K562 (cell line): ENCODE measurements at regions of chr22 and their contacts with region 1.

Region 1: GRCh38 chr22:20238536-20238900 is 29.6 kb downstream of the RTN4R start:
- DNase-seq: peak; percentile 89 to 99 (median 98)
- ATAC-seq: peak; percentile 91
- H3K4me3 ChIP-seq: no peak overlapping the region
- H3K27ac ChIP-seq: no peak overlapping the region
- H3K4me1 ChIP-seq: peaks cover 7 to 86% of the 10 kb centered on the region in 2 experiments; a peak in 3 of 5 replicates
- H3K27me3 ChIP-seq: peaks cover 43 to 98% of the 10 kb centered on the region in 2 experiments
- CTCF ChIP-seq: peak; percentile 98 to 99 (median 99)
- EP300 ChIP-seq: no peak
- POLR2A ChIP-seq: no peak
- RAD21 ChIP-seq: peak in 1 of 2 experiments; percentile 97; a peak in 2 of 4 replicates

Region 2: DNA sequence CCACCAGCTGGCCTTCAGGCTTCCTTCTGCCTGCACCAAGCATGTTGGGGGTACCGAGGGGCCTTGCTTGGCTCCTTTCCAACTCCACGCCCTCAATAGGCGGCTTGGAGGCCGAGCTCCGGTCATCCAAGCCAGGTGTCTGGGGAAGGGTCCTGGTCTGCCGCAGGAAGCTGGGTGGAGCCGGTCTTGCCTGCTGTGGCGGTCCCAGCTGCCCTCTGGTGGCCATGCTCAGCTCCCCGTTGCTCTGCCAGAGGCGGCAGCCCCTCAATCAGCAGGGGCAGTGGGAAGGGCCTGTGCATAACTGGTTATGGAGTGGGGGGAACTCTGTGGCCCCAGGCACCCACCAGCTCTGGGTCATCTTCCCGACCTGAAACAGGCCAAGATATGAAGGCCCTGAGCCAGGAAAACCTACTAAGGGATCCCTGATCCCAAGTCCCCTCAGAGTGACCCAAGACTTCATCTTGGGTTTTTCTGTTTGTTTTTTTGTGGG is 225.1 kb before region 1 on chr22:
- CTCF ChIA-PET with region 1: no interaction called
- POLR2A ChIA-PET with region 1: no interaction called
- in situ Hi-C with region 1: no loop called
- intact Hi-C with region 1: no loop called
- DNase-seq: peak; percentile 87 to 90 (median 88)
- ATAC-seq: peak; percentile 56
- H3K4me3 ChIP-seq: no peak overlapping the region
- H3K27ac ChIP-seq: no peak overlapping the region
- H3K4me1 ChIP-seq: peaks cover 63 to 90% of the 10 kb centered on the region in 2 experiments
- H3K27me3 ChIP-seq: peaks cover 0 to 8% of the 10 kb centered on the region in 2 experiments; a peak in 1 of 5 replicates
- CTCF ChIP-seq: peak; percentile 98 to 100 (median 99)
- EP300 ChIP-seq: no peak
- POLR2A ChIP-seq: no peak
- RAD21 ChIP-seq: peak; percentile 99 to 100

Region 3: GRCh38 chr22:20254975-20255946 is 16.7 kb after region 1 on chr22:
- CTCF ChIA-PET with region 1: no interaction called
- POLR2A ChIA-PET with region 1: interaction called, 19 read pairs
- in situ Hi-C with region 1: no loop called
- intact Hi-C with region 1: no loop called
- DNase-seq: peak in 3 of 4 experiments; percentile 46 to 47 (median 46)
- ATAC-seq: no peak
- H3K4me3 ChIP-seq: no peak overlapping the region
- H3K27ac ChIP-seq: no peak overlapping the region
- H3K4me1 ChIP-seq: peaks cover 14 to 50% of the 10 kb centered on the region in 2 experiments
- H3K27me3 ChIP-seq: peaks cover 0 to 17% of the 10 kb centered on the region in 2 experiments; a peak in 3 of 5 replicates
- CTCF ChIP-seq: no peak
- EP300 ChIP-seq: no peak
- POLR2A ChIP-seq: no peak
- RAD21 ChIP-seq: no peak

Region 4: DNA sequence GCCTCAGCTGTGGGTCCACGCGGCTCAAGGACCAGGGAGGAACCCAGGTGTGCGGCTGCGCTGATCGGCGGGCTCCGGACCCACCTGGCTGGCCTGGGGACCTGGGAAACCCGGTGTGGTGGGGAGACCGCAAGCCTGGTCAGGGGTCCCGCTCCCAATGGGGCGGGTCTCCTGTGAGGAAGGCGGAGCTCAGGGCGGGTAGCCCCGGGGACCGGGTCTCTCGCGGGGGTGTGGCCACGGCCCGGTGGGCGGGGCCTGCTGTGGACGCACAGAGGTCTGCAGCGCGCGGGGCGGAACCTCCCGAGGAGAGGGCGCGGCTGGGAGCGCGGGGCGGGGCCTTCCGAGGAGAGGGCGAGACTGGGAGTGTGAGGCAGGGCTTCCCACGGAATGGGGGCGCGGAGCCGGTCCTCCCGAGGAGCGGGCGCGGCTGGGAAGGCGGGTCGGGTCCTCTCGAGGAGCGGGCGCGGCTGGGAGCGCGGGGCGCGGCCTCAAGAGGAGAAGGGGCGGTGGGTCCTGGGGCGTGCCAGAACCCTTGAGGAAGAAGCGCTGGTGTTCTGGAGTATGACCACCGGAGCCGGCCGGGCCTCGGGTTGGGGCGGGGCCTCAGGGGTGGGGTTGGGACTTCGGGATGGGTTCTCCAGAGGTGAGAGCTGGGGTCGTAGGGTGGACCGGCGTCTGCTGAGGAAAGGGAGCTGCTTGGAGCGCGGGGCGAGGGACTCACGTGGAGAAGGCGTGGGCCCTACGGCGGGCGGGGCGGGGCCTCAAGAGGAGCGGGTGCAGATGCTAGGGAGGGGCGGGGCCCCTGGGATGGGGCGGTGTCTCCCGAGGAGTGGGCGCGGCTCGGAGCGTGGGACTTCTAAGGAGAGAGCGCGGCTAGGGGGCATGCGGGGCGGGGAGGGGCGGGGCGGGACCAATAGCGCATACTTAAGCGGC is 60.6 kb after region 1 on chr22:
- CTCF ChIA-PET with region 1: no interaction called
- POLR2A ChIA-PET with region 1: no interaction called
- in situ Hi-C with region 1: no loop called
- intact Hi-C with region 1: no loop called
- DNase-seq: peak; percentile 99 to 100 (median 100)
- ATAC-seq: peak; percentile 97
- H3K4me3 ChIP-seq: peak overlapping the region; percentile 55
- H3K27ac ChIP-seq: no peak overlapping the region
- H3K4me1 ChIP-seq: peaks cover 8 to 30% of the 10 kb centered on the region in 2 experiments
- H3K27me3 ChIP-seq: peaks cover 58 to 85% of the 10 kb centered on the region in 2 experiments
- CTCF ChIP-seq: peak in 1 of 3 experiments; percentile 9; a peak in 1 of 6 replicates
- EP300 ChIP-seq: no peak
- POLR2A ChIP-seq: no peak
- RAD21 ChIP-seq: no peak